AG04450 (cell line): ENCODE measurements at regions of chr9 and their contacts with region 1.

Region 1: DNA sequence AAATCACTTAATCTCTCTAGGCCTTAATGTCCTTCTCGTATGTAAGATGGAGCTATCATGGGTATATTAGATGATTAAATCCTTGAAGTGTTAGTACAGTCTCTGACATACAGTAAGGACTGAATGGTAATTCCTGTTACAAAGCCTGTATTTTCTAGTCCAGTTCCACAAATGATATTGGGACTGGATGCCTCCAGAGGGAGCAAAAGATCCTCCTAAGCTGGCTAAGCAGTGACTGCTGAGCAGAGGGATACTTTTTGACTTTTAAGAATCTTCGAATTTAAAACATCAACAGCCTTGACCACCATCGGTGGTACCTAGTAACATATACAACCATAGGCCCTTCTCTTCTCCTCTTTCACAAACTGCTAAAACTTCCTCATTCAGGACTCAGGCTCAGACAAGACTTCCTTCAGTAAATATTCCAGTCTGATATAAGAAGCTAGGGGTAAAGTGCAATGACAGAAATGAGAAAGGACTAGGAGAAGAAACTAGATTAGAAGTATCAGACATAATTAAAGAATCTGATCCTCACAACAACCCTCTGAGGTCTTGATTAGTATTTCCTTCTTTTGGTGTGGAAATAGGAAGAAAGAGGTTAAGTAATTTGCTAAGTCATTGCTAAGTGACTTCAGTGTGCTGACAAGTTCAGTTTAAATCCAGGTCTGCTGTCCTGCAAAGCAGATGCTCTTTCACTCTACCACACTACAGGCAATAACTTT is 13.9 kb downstream of the PTAR1 start:
- DNase-seq: no peak
- H3K4me3 ChIP-seq: no peak overlapping the region
- H3K27ac ChIP-seq: no peak overlapping the region
- H3K27me3 ChIP-seq: no peaks in the 10 kb centered on the region
- CTCF ChIP-seq: peak; percentile 45

Region 2: GRCh38 chr9:69731348-69731747 is 14.5 kb before region 1 on chr9:
- CTCF ChIA-PET with region 1: interaction called, 14 read pairs
- POLR2A ChIA-PET with region 1: no interaction called
- DNase-seq: no peak
- H3K4me3 ChIP-seq: no peak overlapping the region
- H3K27ac ChIP-seq: no peak overlapping the region
- H3K27me3 ChIP-seq: no peaks in the 10 kb centered on the region
- CTCF ChIP-seq: no peak

Region 3: GRCh38 chr9:69759421-69760277 is 13.8 kb after region 1 on chr9 and contains the start of gene PTAR1:
- CTCF ChIA-PET with region 1: interaction called, 10 read pairs
- POLR2A ChIA-PET with region 1: interaction called, 6 read pairs
- DNase-seq: peak; percentile 67
- H3K4me3 ChIP-seq: peak within 1 kb of the TSS; percentile 82
- H3K27ac ChIP-seq: peak within 1 kb of the TSS; percentile 88
- H3K27me3 ChIP-seq: no peaks in the 10 kb centered on the region
- CTCF ChIP-seq: no peak
- polyA plus RNA-seq, gene PTAR1: 20.2 and 23.9 TPM in 2 replicates

Region 4: DNA sequence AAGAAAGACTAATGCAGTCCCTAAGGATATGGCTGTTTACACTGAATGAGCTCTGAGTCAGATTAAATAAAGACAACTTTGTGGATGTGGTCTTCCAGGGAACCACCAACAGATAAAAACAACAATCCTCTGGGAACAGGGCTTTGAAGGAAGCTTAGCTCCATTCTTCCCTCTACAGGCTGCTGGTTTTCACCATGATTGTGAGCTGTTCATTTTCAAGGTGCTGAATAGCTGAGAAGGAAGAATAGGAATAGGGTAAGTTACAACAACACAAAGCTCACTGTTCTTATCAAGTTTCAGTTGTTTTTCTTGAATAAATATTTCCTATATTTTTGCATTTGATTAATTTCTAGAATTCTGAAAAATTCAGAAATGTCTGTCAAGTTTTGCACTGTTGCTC is 39.9 kb after region 1 on chr9:
- CTCF ChIA-PET with region 1: interaction called, 22 read pairs
- POLR2A ChIA-PET with region 1: no interaction called
- DNase-seq: peak; percentile 52
- H3K4me3 ChIP-seq: no peak overlapping the region
- H3K27ac ChIP-seq: no peak overlapping the region
- H3K27me3 ChIP-seq: no peaks in the 10 kb centered on the region
- CTCF ChIP-seq: peak; percentile 72

Region 5: GRCh38 chr9:69805962-69806515 is 60.2 kb after region 1 on chr9:
- CTCF ChIA-PET with region 1: no interaction called
- POLR2A ChIA-PET with region 1: no interaction called
- DNase-seq: no peak
- H3K4me3 ChIP-seq: no peak overlapping the region
- H3K27ac ChIP-seq: no peak overlapping the region
- H3K27me3 ChIP-seq: no peaks in the 10 kb centered on the region
- CTCF ChIP-seq: no peak

Region 6: DNA sequence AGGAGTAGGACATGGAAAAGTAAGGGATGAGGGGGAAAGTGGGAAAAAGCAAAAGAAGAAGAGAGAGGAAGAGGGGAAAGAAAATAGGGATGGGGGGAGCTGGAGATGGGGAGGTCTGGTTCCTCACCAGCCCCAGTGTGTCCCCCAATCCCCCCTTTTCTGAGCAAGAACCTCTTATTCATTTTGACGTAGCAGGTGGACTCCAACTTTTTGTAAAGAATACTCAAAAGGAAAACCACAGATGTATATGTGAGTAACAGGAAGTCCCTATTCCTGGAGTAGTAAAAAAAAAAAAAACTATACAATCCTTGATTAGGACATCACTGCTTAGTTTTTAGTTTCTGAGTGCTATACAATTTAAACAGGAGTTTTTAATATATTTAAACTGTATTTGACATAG is 70.9 kb after region 1 on chr9:
- CTCF ChIA-PET with region 1: no interaction called
- POLR2A ChIA-PET with region 1: no interaction called
- DNase-seq: no peak
- H3K4me3 ChIP-seq: no peak overlapping the region
- H3K27ac ChIP-seq: no peak overlapping the region
- H3K27me3 ChIP-seq: peaks cover 7% of the 10 kb centered on the region
- CTCF ChIP-seq: no peak